SK-N-SH (cell line): ENCODE measurements at regions of chr13 and their contacts with region 1.

Region 1: DNA sequence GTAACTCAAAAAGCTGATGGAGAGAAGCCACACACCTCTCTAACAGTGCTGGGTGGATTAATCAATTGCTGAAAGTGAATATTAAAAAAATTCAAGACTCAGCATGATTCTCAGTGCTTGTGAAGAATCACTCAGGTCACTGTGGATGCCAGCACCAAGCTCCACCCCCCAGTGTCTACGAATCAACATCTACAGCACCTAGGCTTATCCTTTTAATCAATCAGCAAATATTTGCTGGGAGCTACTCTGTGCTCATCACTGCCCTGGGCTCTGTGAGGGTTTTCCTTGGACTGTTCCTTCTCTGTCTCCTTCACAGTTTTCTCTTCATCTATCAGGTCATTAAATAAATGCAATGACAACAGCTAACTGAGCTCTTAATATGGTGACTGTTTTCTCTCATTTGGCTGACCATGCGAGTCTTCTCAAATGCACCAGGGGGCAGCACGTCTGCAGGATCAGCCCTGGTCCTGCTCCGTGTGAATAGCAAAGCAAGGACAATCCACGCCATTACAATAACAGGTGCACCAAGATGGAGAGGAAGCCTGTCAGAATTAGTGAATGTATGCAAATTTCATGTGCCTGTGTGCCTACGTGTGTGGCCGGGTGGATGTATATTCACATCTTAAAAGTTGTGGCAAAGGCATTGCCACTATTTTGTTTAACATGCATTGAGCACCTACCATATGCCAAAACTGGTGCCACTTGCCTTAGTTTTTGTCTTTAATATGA is 14.6 kb upstream of the C13orf42 start:
- DNase-seq: peak; percentile 73
- H3K4me3 ChIP-seq: no peak overlapping the region; a peak in 1 of 4 replicates
- H3K27ac ChIP-seq: no peak overlapping the region
- H3K4me1 ChIP-seq: no peaks in the 10 kb centered on the region
- H3K27me3 ChIP-seq: 0 out of 2 replicates have a peak, but pooled peaks cover 13% of the 10 kb centered on the region
- CTCF ChIP-seq: peak; percentile 80
- EP300 ChIP-seq: no peak
- RAD21 ChIP-seq: peak; percentile 93

Region 2: GRCh38 chr13:51112771-51113170 is 12.9 kb before region 1 on chr13:
- CTCF ChIA-PET with region 1: interaction called, 65 read pairs
- POLR2A ChIA-PET with region 1: no interaction called
- DNase-seq: no peak
- H3K4me3 ChIP-seq: no peak overlapping the region
- H3K27ac ChIP-seq: no peak overlapping the region
- H3K4me1 ChIP-seq: no peaks in the 10 kb centered on the region
- H3K27me3 ChIP-seq: no peaks in the 10 kb centered on the region; the same call in 1 of the 2 replicates
- CTCF ChIP-seq: no peak
- EP300 ChIP-seq: no peak
- RAD21 ChIP-seq: no peak

Region 3: DNA sequence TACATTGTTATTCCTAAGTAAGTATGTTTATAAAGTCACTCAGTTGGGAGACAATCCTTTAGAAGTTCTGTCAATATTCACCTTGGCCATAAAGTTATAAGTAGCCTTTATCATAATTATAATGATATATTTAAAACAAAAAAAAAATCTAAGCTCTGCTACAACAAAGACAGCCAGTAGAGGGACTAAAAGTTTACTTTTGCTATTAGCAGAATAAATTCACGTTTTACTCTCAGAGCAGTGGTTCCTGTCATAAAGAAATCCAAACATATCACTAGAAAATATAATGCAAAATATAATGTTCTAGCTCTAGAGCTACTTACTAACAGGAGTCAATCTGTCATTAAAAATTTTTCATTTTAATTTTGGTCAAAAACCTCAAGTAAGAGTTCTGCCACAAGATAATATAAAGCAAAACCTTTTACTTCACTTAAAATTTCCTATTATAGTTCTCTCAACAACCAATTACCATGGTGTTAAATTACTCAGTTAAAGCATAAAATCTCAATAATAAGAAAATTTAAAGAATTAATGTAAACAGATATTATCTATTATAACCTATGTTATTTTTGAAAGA is 309.4 kb after region 1 on chr13:
- CTCF ChIA-PET with region 1: interaction called, 12 read pairs
- POLR2A ChIA-PET with region 1: no interaction called
- DNase-seq: peak; percentile 21
- H3K4me3 ChIP-seq: no peak overlapping the region
- H3K27ac ChIP-seq: no peak overlapping the region
- H3K4me1 ChIP-seq: peaks cover 0 to 10% of the 10 kb centered on the region in 2 experiments; a peak in 3 of 4 replicates
- H3K27me3 ChIP-seq: no peaks in the 10 kb centered on the region
- CTCF ChIP-seq: peak; percentile 81
- EP300 ChIP-seq: no peak
- RAD21 ChIP-seq: peak; percentile 76